Activated CD4-positive, alpha-beta T cell treated with anti-CD3 and anti-CD28 coated beads for 36 hours (primary cell): ENCODE measurements at regions of chr18 and their contacts with region 1.

Region 1: DNA sequence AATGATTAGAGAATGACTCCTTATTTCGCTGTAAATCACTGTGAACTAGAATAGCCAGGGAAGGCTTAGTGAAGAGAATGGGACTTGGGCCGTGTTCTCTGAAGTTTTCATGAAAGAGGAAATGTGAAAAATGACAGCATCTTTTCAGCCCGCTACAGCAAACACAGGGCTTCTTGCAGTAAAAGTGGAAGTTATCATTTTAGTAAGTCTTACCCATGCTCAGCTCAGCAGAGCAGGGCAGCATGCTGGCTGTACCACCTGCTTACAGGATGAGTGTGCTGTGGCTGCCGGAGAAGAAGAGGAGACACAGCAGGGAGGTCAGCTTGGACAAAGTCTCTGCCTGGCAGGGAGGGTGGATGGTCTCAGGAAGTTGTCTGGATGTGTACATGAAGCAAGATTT is 300.7 kb upstream of the DLGAP1 start:
- DNase-seq: no peak
- ATAC-seq: no peak
- H3K4me3 Mint-ChIP-seq: no peak overlapping the region
- H3K27ac Mint-ChIP-seq: no peak overlapping the region
- H3K4me1 Mint-ChIP-seq: no peaks in the 10 kb centered on the region
- H3K27me3 Mint-ChIP-seq: no peaks in the 10 kb centered on the region

Region 2: DNA sequence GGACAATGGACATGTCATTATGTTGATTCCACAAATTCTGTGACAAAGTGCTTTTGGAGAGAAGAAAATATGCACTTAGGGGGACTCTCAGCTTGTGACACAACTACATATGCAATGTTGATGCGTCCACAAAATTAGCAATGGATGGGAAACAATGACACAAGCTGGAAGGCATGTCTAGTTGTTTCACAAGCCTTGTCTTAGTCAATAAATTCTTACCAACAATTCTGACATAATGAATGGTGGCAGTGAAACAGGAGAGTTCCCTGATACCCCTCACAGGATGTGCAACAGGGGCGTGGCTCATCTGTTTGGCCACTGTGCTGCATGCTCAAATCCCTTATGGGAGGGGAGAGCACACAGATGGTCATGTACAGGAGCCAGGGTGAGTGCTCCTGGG is 46.4 kb after region 1 on chr18:
- CTCF ChIA-PET with region 1: no interaction called
- POLR2A ChIA-PET with region 1: no interaction called
- intact Hi-C with region 1: loop called in 1 of 2 experiments (anchors 5 kb)
- DNase-seq: no peak
- ATAC-seq: no peak
- H3K4me3 Mint-ChIP-seq: no peak overlapping the region
- H3K27ac Mint-ChIP-seq: no peak overlapping the region
- H3K4me1 Mint-ChIP-seq: no peaks in the 10 kb centered on the region
- H3K27me3 Mint-ChIP-seq: no peaks in the 10 kb centered on the region